Ascending aorta (tissue), 2 donors: ENCODE measurements at regions of chr18 and their contacts with region 1.

Region 1: DNA sequence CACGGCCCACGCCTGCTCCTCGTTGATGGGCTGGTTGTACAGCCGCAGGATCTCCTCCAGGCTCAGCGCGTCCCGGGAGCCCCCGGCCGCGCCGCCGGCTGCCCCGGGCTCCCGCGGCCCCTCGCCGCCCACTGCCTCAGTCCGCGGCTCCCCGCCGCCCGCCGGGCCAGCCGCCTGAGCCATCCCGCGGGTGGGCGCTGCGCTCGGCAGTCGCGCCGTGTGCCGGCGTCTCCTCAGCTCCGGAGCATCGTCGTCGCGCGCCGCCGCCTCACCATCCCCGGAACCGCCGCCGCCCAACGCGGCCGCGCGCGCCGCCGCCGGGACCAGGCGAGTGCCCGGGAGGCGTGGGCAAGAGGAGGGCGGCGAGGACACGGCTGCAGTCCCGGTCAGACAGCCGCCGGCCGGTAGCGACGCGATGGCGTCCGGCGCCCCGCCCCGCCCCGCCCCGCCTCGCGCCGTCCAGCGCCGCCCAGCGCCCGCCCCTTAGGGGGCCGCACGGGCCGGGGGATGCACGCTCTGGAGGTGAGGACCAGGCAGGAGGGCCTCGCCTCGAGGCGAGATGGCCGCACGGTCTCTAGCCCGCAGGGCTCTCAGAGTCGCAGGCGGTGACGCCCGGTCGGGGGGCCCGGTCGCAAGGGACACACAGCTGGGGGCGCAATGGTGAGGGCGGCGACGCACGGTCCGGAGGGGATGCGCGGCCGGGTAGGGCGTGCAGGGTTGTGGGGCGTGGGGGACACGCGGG is at the start of gene SPIRE1:
- DNase-seq: peak in 1 of 2 donors; percentile 86
- H3K4me3 ChIP-seq: peak within 1 kb of the TSS; percentile 91 to 94
- H3K27ac ChIP-seq: peak within 1 kb of the TSS; percentile 99 to 100
- H3K4me1 ChIP-seq: peaks cover 0 to 22% of the 10 kb centered on the region in 2 donors
- H3K27me3 ChIP-seq: no peaks in the 10 kb centered on the region
- CTCF ChIP-seq: peak in 1 of 3 experiments; percentile 7
- total RNA-seq, gene SPIRE1: 16.9 TPM

Region 2: GRCh38 chr18:12271376-12272235 is 386.2 kb before region 1 on chr18:
- intact Hi-C with region 1: loop called (anchors 5 kb)
- DNase-seq: peak in 1 of 2 donors; percentile 86
- H3K4me3 ChIP-seq: peak overlapping the region; percentile 56 to 65
- H3K27ac ChIP-seq: peak overlapping the region; percentile 67 to 68
- H3K4me1 ChIP-seq: peaks cover 0 to 6% of the 10 kb centered on the region in 2 donors
- H3K27me3 ChIP-seq: no peaks in the 10 kb centered on the region
- CTCF ChIP-seq: peak; percentile 70 to 77 (median 75)

Region 3: GRCh38 chr18:12391618-12392165 is 266.2 kb before region 1 on chr18:
- intact Hi-C with region 1: loop called (anchors 1 kb)
- DNase-seq: peak in 1 of 2 donors; percentile 75
- H3K4me3 ChIP-seq: no peak overlapping the region
- H3K27ac ChIP-seq: peak overlapping the region in 1 of 2 donors; percentile 22
- H3K4me1 ChIP-seq: no peaks in the 10 kb centered on the region
- H3K27me3 ChIP-seq: no peaks in the 10 kb centered on the region
- CTCF ChIP-seq: peak; percentile 83 to 91 (median 88)

Region 4: DNA sequence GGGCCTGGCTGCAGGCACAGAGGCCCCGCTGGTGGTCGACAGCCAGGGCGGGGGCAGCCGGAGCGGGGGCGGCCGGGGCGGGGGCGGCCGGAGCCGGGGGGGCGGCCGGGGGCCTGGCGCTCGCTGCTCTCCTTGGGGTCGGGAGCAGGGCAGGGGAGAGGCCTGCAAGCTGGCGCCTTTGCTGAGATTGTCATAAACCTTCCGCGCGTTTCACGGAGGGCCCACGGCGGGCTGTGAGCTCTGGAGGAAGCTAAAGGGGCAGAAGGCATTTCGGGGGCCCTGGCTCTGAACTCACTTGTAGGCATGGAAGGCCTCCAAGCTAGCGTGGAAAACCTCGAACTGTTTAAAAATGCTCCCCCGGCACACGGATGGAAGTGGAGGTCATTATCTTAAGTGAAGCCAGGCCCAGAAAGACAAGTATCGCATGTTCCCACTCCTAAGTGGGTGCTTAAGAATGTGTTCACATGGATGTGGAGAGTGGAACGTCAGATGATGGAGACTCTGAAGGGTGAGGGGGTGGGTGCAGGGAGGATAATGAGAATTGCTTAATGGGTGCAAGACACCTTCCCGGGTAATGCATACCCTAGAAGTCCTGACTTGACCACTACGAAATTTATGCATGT is 249.5 kb before region 1 on chr18:
- intact Hi-C with region 1: loop called (anchors 1 kb)
- DNase-seq: no peak
- H3K4me3 ChIP-seq: peak overlapping the region; percentile 80 to 93
- H3K27ac ChIP-seq: peak overlapping the region; percentile 84 to 87
- H3K4me1 ChIP-seq: peaks cover 0 to 12% of the 10 kb centered on the region in 2 donors
- H3K27me3 ChIP-seq: no peaks in the 10 kb centered on the region
- CTCF ChIP-seq: no peak

Region 5: DNA sequence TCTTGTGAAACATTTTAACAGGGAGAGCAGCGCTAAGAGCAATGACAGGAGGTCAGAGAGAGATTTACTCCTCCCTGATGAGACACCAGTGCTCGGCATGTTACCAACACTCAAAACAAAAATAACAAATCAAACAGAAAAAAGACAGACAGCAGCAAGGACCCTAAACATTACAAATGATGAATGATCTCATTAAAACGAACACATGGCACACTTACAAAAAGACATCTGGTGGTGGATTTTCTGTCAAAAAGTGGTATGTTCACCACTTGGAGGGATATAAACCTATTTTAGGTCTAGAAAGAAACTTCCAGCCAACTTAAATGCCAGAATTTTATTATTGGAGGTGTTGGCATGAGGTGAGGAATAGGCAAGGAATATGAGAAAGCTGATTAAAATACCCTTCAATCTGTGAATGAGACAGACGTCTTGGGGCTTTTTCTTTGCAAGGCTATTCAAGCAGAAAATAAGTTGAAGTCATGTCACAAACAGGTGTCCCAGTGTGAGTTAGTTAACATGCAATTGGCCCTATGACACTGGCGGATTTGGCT is 137.3 kb before region 1 on chr18:
- intact Hi-C with region 1: loop called (anchors 5 kb)
- DNase-seq: no peak
- H3K4me3 ChIP-seq: no peak overlapping the region
- H3K27ac ChIP-seq: peak overlapping the region in 1 of 2 donors; percentile 35
- H3K4me1 ChIP-seq: peaks cover 5 to 19% of the 10 kb centered on the region in 2 donors
- H3K27me3 ChIP-seq: no peaks in the 10 kb centered on the region
- CTCF ChIP-seq: no peak

Region 6: DNA sequence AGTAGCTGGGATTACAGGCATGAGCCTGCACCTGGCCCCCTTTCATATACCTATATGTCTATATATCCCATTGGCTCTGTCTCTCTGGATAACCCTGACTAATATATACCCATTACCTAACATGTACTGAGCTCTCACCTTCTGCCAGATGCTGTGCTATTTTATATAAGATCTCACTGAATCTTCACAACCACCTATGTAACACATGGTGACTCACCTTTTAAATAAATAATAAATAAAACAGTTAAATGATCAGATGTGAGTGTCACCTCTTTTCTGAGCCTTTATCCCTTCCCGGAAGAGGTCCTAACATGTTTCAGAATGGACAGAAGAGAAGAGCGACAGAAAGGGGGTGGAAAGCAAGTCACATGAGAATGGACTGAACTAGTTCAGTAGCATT is 123.0 kb before region 1 on chr18:
- intact Hi-C with region 1: loop called (anchors 5 kb)
- DNase-seq: no peak
- H3K4me3 ChIP-seq: no peak overlapping the region
- H3K27ac ChIP-seq: no peak overlapping the region
- H3K4me1 ChIP-seq: no peaks in the 10 kb centered on the region
- H3K27me3 ChIP-seq: no peaks in the 10 kb centered on the region
- CTCF ChIP-seq: no peak

Region 7: GRCh38 chr18:12597775-12598174 is 60.1 kb before region 1 on chr18:
- intact Hi-C with region 1: loop called (anchors 5 kb)
- DNase-seq: no peak
- H3K4me3 ChIP-seq: no peak overlapping the region
- H3K27ac ChIP-seq: peak overlapping the region; percentile 50 to 51
- H3K4me1 ChIP-seq: peaks cover 6 to 15% of the 10 kb centered on the region in 2 donors
- H3K27me3 ChIP-seq: no peaks in the 10 kb centered on the region
- CTCF ChIP-seq: no peak

Region 8: GRCh38 chr18:12639990-12640880 is 17.6 kb before region 1 on chr18:
- intact Hi-C with region 1: no loop called
- DNase-seq: no peak
- H3K4me3 ChIP-seq: no peak overlapping the region
- H3K27ac ChIP-seq: no peak overlapping the region
- H3K4me1 ChIP-seq: peaks cover 0 to 12% of the 10 kb centered on the region in 2 donors
- H3K27me3 ChIP-seq: no peaks in the 10 kb centered on the region
- CTCF ChIP-seq: no peak

Region 9: DNA sequence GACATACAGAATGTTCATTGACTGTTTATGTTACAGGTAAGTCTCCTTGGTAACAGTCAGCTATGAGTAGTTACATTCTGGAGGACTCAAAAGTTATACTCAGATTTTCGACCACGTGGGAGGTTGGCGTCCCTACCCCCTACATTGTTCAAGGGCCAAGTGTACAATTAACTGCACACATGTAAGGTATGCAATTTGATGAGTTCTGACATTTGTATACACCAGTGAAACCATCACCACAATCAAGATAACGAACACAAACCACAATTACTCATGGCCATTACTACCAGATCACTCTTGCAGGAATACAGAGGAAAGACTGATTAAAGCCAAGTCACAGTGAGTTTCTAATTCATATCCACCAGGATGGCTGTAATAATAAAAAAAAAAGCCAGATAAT is 521.1 kb after region 1 on chr18:
- intact Hi-C with region 1: no loop called
- DNase-seq: no peak
- H3K4me3 ChIP-seq: no peak overlapping the region
- H3K27ac ChIP-seq: no peak overlapping the region
- H3K4me1 ChIP-seq: no peaks in the 10 kb centered on the region
- H3K27me3 ChIP-seq: no peaks in the 10 kb centered on the region
- CTCF ChIP-seq: no peak